Head of caudate nucleus (tissue), 42 donors: ENCODE measurements at regions of chr16 and their contacts with region 1.

Region 1: GRCh38 chr16:24253192-24253591 is 2.9 kb upstream of the CACNG3 start:
- DNase-seq: peak; percentile 32 to 85 (median 60)

Region 2: GRCh38 chr16:24041826-24042631 is 211.2 kb before region 1 on chr16:
- intact Hi-C with region 1: loop called (anchors 5 kb)
- DNase-seq: peak; percentile 45 to 93 (median 83)

Region 3: DNA sequence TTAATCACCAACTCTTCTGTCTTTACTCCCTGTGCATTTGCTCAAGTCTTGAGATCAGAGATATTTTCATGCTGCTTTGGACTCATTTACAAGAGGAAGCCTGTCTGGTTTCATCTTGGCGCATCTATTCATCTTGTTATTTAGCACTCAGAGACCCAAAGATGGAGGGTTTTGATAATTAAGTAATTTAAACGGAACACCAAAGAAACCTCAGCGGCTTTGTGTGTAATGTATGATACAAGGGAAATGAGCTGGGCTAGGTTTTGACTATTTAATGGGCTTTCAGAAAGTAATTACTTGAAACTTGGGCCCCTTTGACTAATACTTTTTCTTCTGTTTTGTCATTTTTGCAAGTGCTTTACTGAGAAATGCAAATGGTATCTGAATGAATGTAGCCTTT is 63.3 kb before region 1 on chr16:
- intact Hi-C with region 1: no loop called
- DNase-seq: no peak

Region 4: GRCh38 chr16:24499193-24499814 is 246.1 kb after region 1 on chr16:
- intact Hi-C with region 1: loop called (anchors 10 kb)
- DNase-seq: peak; percentile 36 to 85 (median 68)

Region 5: GRCh38 chr16:24525970-24526559 is 272.9 kb after region 1 on chr16:
- intact Hi-C with region 1: no loop called
- DNase-seq: peak in 1 of 42 donors; percentile 13